K562 (cell line): ENCODE measurements at regions of chr1 and their contacts with region 1.

Region 1: GRCh38 chr1:94522304-94522703 is 19.3 kb downstream of the F3 start:
- DNase-seq: peak in 1 of 4 experiments; percentile 43
- ATAC-seq: peak; percentile 67; the same call in 2 of the 3 replicates
- H3K4me3 ChIP-seq: no peak overlapping the region
- H3K27ac ChIP-seq: no peak overlapping the region
- H3K4me1 ChIP-seq: no peaks in the 10 kb centered on the region
- H3K27me3 ChIP-seq: no peaks in the 10 kb centered on the region
- CTCF ChIP-seq: peak; percentile 43 to 62 (median 49); a peak in 5 of 6 replicates
- EP300 ChIP-seq: no peak
- POLR2A ChIP-seq: no peak
- RAD21 ChIP-seq: peak; percentile 80 to 82

Region 2: DNA sequence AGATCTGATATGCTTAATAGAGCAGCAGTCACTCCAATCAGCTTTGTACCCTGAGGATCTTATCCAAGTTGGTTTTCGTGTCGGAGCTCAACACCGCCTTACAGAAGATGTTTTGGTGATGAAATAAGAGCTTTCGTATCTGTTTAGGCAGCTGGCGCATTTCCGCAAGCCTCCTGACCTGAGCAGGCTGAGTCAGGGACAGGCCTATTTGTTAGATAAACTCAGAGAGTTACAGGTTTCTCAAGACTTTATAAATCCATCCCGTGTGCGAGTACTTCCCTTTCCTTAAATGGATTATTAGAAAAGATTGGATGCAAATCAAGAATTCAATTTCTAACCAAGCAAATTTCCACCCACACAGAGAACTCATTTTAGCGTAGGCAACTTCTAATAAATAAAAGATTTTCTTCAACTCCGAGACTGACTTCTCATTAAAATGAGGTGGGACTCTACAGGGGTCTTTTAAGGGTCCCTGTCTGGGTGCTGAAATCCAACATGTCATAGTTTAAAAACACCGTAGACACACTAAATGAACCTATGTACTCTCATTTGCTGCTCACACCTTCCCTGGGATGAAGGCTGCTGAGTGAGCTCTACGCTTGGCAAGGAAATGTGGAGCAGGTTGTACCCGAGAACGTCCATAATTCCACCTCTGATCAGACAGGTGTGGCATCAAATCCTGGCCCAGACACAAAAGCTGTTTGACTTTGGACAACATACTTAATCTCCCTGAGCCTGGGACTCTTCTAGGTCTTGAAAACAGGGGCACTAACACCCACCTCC is 126.1 kb after region 1 on chr1:
- CTCF ChIA-PET with region 1: no interaction called
- POLR2A ChIA-PET with region 1: no interaction called
- in situ Hi-C with region 1: no loop called
- intact Hi-C with region 1: no loop called
- DNase-seq: peak; percentile 21 to 58 (median 37)
- ATAC-seq: peak; percentile 90
- H3K4me3 ChIP-seq: no peak overlapping the region
- H3K27ac ChIP-seq: no peak overlapping the region
- H3K4me1 ChIP-seq: peaks cover 0 to 11% of the 10 kb centered on the region in 2 experiments; a peak in 1 of 5 replicates
- H3K27me3 ChIP-seq: peaks cover 0 to 10% of the 10 kb centered on the region in 2 experiments; a peak in 3 of 5 replicates
- CTCF ChIP-seq: no peak
- EP300 ChIP-seq: peak; percentile 75; the same call in 1 of the 2 replicates
- POLR2A ChIP-seq: no peak
- RAD21 ChIP-seq: no peak

Region 3: DNA sequence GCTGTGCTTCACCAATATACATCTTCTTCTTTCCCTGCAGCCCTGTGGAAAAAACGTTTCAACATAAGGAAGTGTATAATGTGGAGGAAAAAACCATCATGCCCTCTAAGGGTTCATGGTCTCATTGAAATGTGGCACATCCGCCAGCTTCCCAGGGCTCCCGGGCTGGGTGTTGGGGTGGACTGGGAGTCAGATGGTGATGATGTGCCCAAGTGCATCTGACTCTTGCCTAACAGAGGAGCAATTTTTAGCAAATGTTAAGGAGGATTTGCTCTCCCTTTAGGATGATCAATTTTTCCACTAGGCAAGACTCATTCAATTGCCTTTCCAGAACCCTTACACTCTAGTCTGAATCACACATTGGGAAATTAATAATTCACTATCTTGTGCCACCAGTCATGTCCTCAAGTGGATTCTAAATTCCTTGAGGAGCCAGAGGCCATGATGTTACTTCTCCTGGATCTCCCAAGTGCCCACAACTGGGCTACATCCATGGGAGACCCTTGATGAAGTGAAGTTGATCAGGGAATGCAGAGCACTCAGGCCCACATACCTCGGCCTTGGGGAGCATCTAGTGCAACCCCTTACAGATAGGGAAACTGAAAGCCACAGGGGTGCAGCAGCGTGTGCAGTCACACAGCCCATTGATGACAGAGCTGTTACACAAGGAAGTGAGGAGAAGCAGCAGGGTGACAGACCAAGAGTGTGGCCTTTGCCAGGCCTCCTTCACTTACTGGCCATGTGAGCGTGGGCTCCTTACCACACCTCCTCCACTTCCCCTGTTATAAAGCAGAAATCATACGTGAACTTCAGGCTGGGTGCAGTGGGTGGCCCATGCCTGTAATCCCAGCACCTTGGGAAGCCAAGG is 197.9 kb after region 1 on chr1:
- CTCF ChIA-PET with region 1: no interaction called
- POLR2A ChIA-PET with region 1: no interaction called
- in situ Hi-C with region 1: no loop called
- intact Hi-C with region 1: loop called (anchors 5 kb)
- DNase-seq: no peak
- ATAC-seq: no peak
- H3K4me3 ChIP-seq: no peak overlapping the region
- H3K27ac ChIP-seq: no peak overlapping the region
- H3K4me1 ChIP-seq: no peaks in the 10 kb centered on the region
- H3K27me3 ChIP-seq: peaks cover 4 to 27% of the 10 kb centered on the region in 2 experiments; a peak in 3 of 5 replicates
- CTCF ChIP-seq: no peak
- EP300 ChIP-seq: no peak
- POLR2A ChIP-seq: no peak
- RAD21 ChIP-seq: no peak